ENCODE measurements at regions of chr4 and their contacts with region 1.

Region 1: DNA sequence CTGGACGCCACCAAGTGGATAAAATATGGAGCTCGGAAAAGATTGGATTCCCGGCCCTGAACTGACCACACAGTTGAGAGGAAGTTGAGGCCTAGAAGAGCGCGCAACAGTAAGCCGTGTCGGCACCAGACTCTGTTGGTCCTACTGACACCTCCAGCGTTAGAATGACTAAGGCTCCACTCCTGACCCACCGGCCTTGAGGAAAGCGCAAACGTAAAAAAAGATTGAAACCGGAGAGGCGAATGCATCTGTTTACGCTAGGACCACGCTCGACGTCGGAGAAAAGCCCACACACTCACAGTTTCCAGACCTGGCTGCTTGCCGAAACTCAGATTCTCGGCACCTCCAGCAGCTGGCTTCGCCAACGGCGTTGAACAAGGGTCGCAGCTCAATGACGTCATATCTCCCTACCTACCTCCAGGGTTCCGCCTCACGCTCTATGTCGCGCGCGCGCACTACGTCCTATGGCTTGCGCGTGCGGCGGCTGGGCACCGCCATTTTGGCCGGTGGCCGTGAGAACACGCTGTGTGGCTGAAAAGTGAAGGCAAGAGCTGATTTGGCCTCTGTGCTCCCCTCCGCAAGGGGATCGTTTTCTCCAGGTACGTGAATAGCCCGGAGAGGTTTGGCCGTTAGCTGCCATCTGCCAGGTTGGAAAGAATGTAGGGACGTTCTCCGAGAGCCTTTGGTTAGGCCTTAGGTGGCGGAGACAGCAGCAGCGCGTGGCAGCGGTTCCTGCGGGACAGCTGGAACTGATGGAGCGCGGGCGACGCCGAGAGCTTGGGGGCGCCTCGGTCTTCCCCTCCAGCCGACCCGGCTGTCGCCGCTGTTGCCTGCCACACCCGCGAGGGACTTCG is at the starts of genes ABCE1 and ANAPC10:
- DNase-seq: peak; percentile 95 to 98 (median 98)
- H3K4me3 ChIP-seq: peak within 1 kb of the TSS; percentile 71 to 84 (median 84)
- H3K4me3 Mint-ChIP-seq: peak within 1 kb of the TSS; percentile 91 to 98
- H3K27ac ChIP-seq: peak within 1 kb of the TSS; percentile 95 to 98
- H3K27ac Mint-ChIP-seq: peak within 1 kb of the TSS; percentile 93 to 100 (median 99)
- H3K4me1 ChIP-seq: peaks cover 28 to 36% of the 10 kb centered on the region in 2 donors
- H3K4me1 Mint-ChIP-seq: peaks cover 25% of the 10 kb centered on the region
- H3K27me3 ChIP-seq: no peaks in the 10 kb centered on the region
- H3K27me3 Mint-ChIP-seq: no peaks in the 10 kb centered on the region
- CTCF ChIP-seq: no peak
- polyA plus RNA-seq, gene ABCE1: 22.1 to 25.0 (median 23.7) TPM
- polyA plus RNA-seq, gene ANAPC10: 11.1 to 25.4 (median 21.3) TPM

Region 2: GRCh38 chr4:145041378-145041777 is 56.7 kb before region 1 on chr4:
- intact Hi-C with region 1: no loop called
- DNase-seq: peak; percentile 22 to 51 (median 44)
- H3K4me3 ChIP-seq: no peak overlapping the region
- H3K4me3 Mint-ChIP-seq: no peak overlapping the region
- H3K27ac ChIP-seq: no peak overlapping the region
- H3K27ac Mint-ChIP-seq: no peak overlapping the region
- H3K4me1 ChIP-seq: peaks cover 0 to 5% of the 10 kb centered on the region in 2 donors
- H3K4me1 Mint-ChIP-seq: peaks cover 6% of the 10 kb centered on the region
- H3K27me3 ChIP-seq: no peaks in the 10 kb centered on the region
- H3K27me3 Mint-ChIP-seq: peaks cover 0 to 2% (median 0%) of the 10 kb centered on the region in 3 donors
- CTCF ChIP-seq: no peak

Region 3: GRCh38 chr4:145180298-145181090 is 82.4 kb after region 1 on chr4 and contains the start of gene OTUD4:
- intact Hi-C with region 1: loop called in 1 of 2 experiments (anchors 10 kb)
- DNase-seq: peak; percentile 91 to 93 (median 91)
- H3K4me3 ChIP-seq: peak within 1 kb of the TSS; percentile 67 to 96 (median 80)
- H3K4me3 Mint-ChIP-seq: peak within 1 kb of the TSS; percentile 85 to 93
- H3K27ac ChIP-seq: peak within 1 kb of the TSS; percentile 86 to 93
- H3K27ac Mint-ChIP-seq: peak within 1 kb of the TSS; percentile 93 to 98 (median 95)
- H3K4me1 ChIP-seq: peaks cover 30 to 34% of the 10 kb centered on the region in 2 donors
- H3K4me1 Mint-ChIP-seq: peaks cover 36% of the 10 kb centered on the region
- H3K27me3 ChIP-seq: no peaks in the 10 kb centered on the region
- H3K27me3 Mint-ChIP-seq: peaks cover 0 to 4% (median 3%) of the 10 kb centered on the region in 3 donors
- CTCF ChIP-seq: no peak
- polyA plus RNA-seq, gene OTUD4: 7.5 to 14.4 (median 9.0) TPM